OCI-LY7 (cell line): ENCODE measurements at regions of chr19 and their contacts with region 1.

Region 1: GRCh38 chr19:18521885-18522624 is at the start of gene ELL:
- DNase-seq: peak; percentile 100
- H3K4me3 ChIP-seq: peak within 1 kb of the TSS; percentile 92
- H3K27ac ChIP-seq: peak within 1 kb of the TSS; percentile 52
- H3K4me1 ChIP-seq: peaks cover 17% of the 10 kb centered on the region
- CTCF ChIP-seq: no peak
- total RNA-seq, gene ELL: 14.4 and 18.7 TPM in 2 replicates

Region 2: GRCh38 chr19:17522988-17523872 is 998.8 kb before region 1 on chr19:
- CTCF ChIA-PET with region 1: no interaction called
- POLR2A ChIA-PET with region 1: no interaction called
- intact Hi-C with region 1: loop called (anchors 10 kb)
- DNase-seq: peak; percentile 97
- H3K4me3 ChIP-seq: peak overlapping the region; percentile 46
- H3K27ac ChIP-seq: peak overlapping the region; percentile 95
- H3K4me1 ChIP-seq: peaks cover 63% of the 10 kb centered on the region
- CTCF ChIP-seq: no peak

Region 3: GRCh38 chr19:18496167-18496979 is 25.7 kb before region 1 on chr19:
- CTCF ChIA-PET with region 1: no interaction called
- POLR2A ChIA-PET with region 1: no interaction called
- intact Hi-C with region 1: no loop called
- DNase-seq: no peak
- H3K4me3 ChIP-seq: no peak overlapping the region
- H3K27ac ChIP-seq: no peak overlapping the region
- H3K4me1 ChIP-seq: peaks cover 19% of the 10 kb centered on the region
- CTCF ChIP-seq: no peak

Region 4: GRCh38 chr19:18557474-18558201 is 35.6 kb after region 1 on chr19 and contains the start of gene KXD1:
- CTCF ChIA-PET with region 1: interaction called, 3 read pairs
- POLR2A ChIA-PET with region 1: interaction called, 3 read pairs
- intact Hi-C with region 1: loop called (anchors 2 kb)
- DNase-seq: peak; percentile 100
- H3K4me3 ChIP-seq: peak within 1 kb of the TSS; percentile 95
- H3K27ac ChIP-seq: peak within 1 kb of the TSS; percentile 65
- H3K4me1 ChIP-seq: peaks cover 29% of the 10 kb centered on the region
- CTCF ChIP-seq: no peak
- total RNA-seq, gene KXD1: 96.0 and 99.8 TPM in 2 replicates

Region 5: DNA sequence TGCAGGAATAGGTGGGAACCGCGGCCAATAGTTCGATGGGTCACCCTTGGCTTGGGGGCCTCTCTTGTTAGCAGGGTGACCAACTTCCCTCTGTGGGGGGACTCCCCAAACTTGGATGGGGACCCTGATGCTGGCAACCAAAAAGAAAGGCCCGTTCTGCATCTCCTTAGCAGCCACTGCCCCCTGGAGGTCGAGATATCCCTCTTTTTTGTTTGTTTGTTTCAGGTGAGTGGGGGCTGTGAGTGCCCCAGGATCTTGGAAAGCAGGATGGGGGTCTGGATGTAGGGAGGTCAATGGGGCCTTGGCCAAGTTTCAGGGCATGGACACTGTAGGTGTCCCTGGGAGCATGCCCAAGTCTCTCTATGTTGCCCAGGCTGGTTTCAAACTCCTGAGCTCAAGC is 153.7 kb after region 1 on chr19:
- CTCF ChIA-PET with region 1: no interaction called
- POLR2A ChIA-PET with region 1: no interaction called
- intact Hi-C with region 1: loop called (anchors 1 kb)
- DNase-seq: peak; percentile 48
- H3K4me3 ChIP-seq: no peak overlapping the region
- H3K27ac ChIP-seq: no peak overlapping the region
- H3K4me1 ChIP-seq: no peaks in the 10 kb centered on the region
- CTCF ChIP-seq: peak; percentile 81

Region 6: GRCh38 chr19:19155495-19156219 is 633.6 kb after region 1 on chr19:
- CTCF ChIA-PET with region 1: no interaction called
- POLR2A ChIA-PET with region 1: no interaction called
- intact Hi-C with region 1: loop called (anchors 10 kb)
- DNase-seq: peak; percentile 98
- H3K4me3 ChIP-seq: peak overlapping the region; percentile 59
- H3K27ac ChIP-seq: peak overlapping the region; percentile 98
- H3K4me1 ChIP-seq: peaks cover 96% of the 10 kb centered on the region
- CTCF ChIP-seq: no peak